Right lobe of liver (tissue), 6 donors: ENCODE measurements at regions of chr6 and their contacts with region 1.

Region 1: GRCh38 chr6:12605888-12606345 is 110.7 kb upstream of the PHACTR1 start:
- DNase-seq: peak in 1 of 3 donors; percentile 57
- ATAC-seq: peak; percentile 92 to 96 (median 94)
- H3K4me3 ChIP-seq: no peak overlapping the region
- H3K27ac ChIP-seq: no peak overlapping the region
- H3K4me1 ChIP-seq: no peaks in the 10 kb centered on the region
- H3K27me3 ChIP-seq: no peaks in the 10 kb centered on the region
- CTCF ChIP-seq: peak; percentile 72 to 79 (median 73)
- POLR2A ChIP-seq: no peak

Region 2: DNA sequence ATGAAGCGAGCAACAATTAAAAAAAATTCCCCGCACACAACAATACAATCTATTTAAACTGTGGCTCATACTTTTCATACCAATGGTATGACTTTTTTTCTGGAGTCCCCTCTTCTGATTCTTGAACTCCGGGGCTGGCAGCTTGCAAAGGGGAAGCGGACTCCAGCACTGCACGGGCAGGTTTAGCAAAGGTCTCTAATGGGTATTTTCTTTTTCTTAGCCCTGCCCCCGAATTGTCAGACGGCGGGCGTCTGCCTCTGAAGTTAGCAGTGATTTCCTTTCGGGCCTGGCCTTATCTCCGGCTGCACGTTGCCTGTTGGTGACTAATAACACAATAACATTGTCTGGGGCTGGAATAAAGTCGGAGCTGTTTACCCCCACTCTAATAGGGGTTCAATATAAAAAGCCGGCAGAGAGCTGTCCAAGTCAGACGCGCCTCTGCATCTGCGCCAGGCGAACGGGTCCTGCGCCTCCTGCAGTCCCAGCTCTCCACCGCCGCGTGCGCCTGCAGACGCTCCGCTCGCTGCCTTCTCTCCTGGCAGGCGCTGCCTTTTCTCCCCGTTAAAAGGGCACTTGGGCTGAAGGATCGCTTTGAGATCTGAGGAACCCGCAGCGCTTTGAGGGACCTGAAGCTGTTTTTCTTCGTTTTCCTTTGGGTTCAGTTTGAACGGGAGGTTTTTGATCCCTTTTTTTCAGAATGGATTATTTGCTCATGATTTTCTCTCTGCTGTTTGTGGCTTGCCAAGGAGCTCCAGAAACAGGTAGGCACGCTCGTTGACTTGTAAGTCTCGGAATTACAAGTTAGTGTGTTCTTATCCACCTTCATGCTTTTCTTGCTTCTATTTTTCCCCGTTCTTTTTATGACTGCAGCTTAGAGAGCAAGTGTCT is 315.7 kb before region 1 on chr6 and contains the start of gene EDN1:
- intact Hi-C with region 1: loop called (anchors 5 to 10 kb)
- DNase-seq: peak; percentile 79 to 87 (median 86)
- ATAC-seq: peak; percentile 87 to 94 (median 92)
- H3K4me3 ChIP-seq: peak within 1 kb of the TSS; percentile 27 to 45 (median 33)
- H3K27ac ChIP-seq: peak within 1 kb of the TSS in 1 of 3 donors; percentile 9
- H3K4me1 ChIP-seq: peaks cover 0 to 10% (median 4%) of the 10 kb centered on the region in 4 donors
- H3K27me3 ChIP-seq: no peaks in the 10 kb centered on the region
- CTCF ChIP-seq: peak; percentile 42 to 59 (median 50)
- POLR2A ChIP-seq: peak; percentile 36
- total RNA-seq, gene EDN1: 0.18 to 6.8 (median 1.4) TPM

Region 3: GRCh38 chr6:12957321-12958051 is 351.6 kb after region 1 on chr6:
- intact Hi-C with region 1: no loop called
- DNase-seq: peak; percentile 48 to 59 (median 51)
- ATAC-seq: peak; percentile 75 to 82 (median 80)
- H3K4me3 ChIP-seq: peak overlapping the region; percentile 33 to 56 (median 54)
- H3K27ac ChIP-seq: peak overlapping the region; percentile 27 to 77 (median 51)
- H3K4me1 ChIP-seq: peaks cover 0 to 16% (median 4%) of the 10 kb centered on the region in 4 donors
- H3K27me3 ChIP-seq: peaks cover 0 to 5% of the 10 kb centered on the region in 2 donors
- CTCF ChIP-seq: no peak
- POLR2A ChIP-seq: no peak